K562 (cell line): ENCODE measurements at regions of chr1 and their contacts with region 1.

Region 1: DNA sequence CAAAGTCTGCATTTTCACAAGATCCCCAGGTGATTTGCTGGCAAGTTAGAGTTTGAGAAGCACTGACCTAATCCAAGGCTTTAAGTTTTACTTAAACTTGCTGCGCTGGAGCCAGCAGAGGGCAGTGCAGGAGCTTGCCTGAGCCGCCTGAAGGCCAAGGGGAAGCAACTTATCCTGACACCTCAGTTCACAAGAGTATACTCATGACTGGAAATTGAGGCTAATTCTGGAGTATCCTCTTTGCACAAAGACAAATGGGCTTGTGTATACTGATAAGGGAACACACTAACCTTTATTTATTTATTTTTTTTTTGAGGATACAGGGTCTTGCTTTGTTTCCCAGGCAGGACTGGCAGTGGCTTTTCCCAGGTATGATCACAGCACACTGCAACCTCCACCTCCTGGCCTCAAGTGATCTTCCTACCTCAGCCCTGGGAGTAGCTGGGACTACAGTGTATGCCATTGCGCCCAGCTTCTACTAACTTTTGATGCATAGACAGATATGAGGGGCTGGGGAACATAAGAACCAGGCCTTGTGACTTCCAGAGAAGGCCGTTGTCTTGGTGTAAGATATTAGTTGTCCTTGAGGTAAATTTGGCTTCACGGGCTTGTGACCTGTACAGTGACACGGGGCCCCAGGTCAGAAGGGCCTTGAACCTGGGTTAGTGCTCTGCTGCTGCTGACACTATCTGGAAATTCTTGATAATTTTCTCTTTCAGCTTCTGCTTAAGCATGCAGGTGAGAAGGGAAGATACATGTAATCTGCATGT is 29.0 kb upstream of the SLAMF1 start:
- DNase-seq: peak; percentile 45 to 86 (median 58)
- ATAC-seq: peak; percentile 98
- H3K4me3 ChIP-seq: no peak overlapping the region
- H3K27ac ChIP-seq: no peak overlapping the region
- H3K4me1 ChIP-seq: peaks cover 4 to 13% of the 10 kb centered on the region in 2 experiments
- H3K27me3 ChIP-seq: no peaks in the 10 kb centered on the region; a peak in 1 of 5 replicates
- CTCF ChIP-seq: peak; percentile 87 to 93 (median 90)
- EP300 ChIP-seq: 0 out of 2 replicates have a peak, but pooled peaks have one; percentile 21
- POLR2A ChIP-seq: no peak
- RAD21 ChIP-seq: peak; percentile 79 to 80

Region 2: DNA sequence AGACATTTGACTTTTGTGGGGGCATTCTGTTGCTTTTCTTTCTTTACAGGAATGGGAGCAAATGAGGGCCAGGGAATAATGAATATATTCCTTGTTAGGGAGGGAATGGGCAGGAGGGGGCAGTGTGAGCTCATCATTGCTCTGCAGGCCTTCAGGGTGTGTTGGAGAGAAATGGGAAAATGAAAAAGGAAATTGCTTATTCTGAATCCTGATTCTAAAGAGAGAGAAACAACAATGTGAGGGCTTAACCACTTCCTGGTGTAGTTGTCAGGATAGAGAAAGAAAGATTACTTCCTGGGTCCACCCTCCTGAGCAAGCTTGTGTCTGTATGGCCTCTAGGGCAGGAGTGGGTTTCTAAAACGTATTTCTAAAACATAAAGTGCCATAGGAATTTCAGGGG is 247.2 kb before region 1 on chr1:
- CTCF ChIA-PET with region 1: interaction called, 9 read pairs
- POLR2A ChIA-PET with region 1: no interaction called
- in situ Hi-C with region 1: loop called (anchors 5 kb)
- intact Hi-C with region 1: loop called (anchors 1 kb)
- DNase-seq: peak; percentile 70 to 77 (median 74)
- ATAC-seq: peak; percentile 89
- H3K4me3 ChIP-seq: no peak overlapping the region
- H3K27ac ChIP-seq: no peak overlapping the region; the same call in 2 of the 3 replicates
- H3K4me1 ChIP-seq: peaks cover 4 to 16% of the 10 kb centered on the region in 2 experiments; a peak in 4 of 5 replicates
- H3K27me3 ChIP-seq: no peaks in the 10 kb centered on the region
- CTCF ChIP-seq: peak; percentile 70 to 95 (median 87)
- EP300 ChIP-seq: peak; percentile 38; the same call in 1 of the 2 replicates
- POLR2A ChIP-seq: no peak
- RAD21 ChIP-seq: peak; percentile 99

Region 3: GRCh38 chr1:160618763-160619274 is 57.0 kb before region 1 on chr1:
- CTCF ChIA-PET with region 1: no interaction called
- POLR2A ChIA-PET with region 1: no interaction called
- in situ Hi-C with region 1: no loop called
- intact Hi-C with region 1: loop called (anchors 2 kb)
- DNase-seq: peak; percentile 33 to 51 (median 44)
- ATAC-seq: peak; percentile 70
- H3K4me3 ChIP-seq: no peak overlapping the region
- H3K27ac ChIP-seq: no peak overlapping the region
- H3K4me1 ChIP-seq: peaks cover 0 to 2% of the 10 kb centered on the region in 2 experiments; a peak in 3 of 5 replicates
- H3K27me3 ChIP-seq: no peaks in the 10 kb centered on the region
- CTCF ChIP-seq: peak; percentile 54 to 66 (median 64)
- EP300 ChIP-seq: no peak
- POLR2A ChIP-seq: no peak
- RAD21 ChIP-seq: peak in 1 of 2 experiments; percentile 52; a peak in 2 of 4 replicates

Region 4: DNA sequence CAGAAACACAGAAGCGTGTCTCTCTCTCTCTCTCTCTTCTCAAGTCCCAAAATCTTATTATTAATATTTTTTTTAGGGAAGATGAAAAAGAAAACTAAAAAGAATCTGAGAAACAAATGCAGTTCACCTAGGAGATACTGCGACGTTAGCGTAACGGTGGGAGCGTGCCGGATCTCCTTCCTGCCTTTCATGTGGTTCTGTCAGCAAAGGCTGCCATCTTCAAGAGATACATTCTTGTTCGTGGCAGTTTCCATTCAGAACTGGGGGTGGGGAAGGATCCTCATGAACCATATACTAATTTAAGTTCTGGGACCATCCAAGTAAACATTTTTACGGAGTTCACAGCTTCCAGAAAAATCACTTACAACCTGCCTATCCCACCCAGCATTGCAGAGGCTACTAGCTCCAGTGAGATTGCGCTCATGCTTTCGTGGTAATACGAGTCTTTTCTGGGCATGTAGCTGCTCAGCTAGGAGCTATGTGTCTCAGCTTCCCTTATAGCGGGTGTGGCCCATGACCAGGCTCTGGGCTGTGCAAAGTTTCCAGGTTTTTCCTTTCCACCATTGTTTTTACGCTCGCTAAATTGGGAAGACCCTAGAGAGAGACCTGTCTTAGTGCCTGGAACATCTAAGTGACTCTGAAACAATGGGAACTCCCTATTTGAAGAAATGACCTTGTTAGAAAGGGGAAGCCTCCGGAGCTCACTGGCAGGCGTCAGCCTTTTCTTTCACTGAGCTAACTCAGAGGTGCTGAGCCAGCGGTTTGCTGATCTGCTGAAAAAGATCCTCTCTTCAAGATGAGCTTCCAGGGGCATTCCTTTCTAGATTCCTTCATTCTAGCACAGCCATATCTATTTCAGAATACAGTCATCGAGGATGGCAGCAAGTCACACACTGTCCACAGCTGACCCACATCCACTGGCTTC is 46.3 kb before region 1 on chr1:
- CTCF ChIA-PET with region 1: no interaction called
- POLR2A ChIA-PET with region 1: no interaction called
- in situ Hi-C with region 1: no loop called
- intact Hi-C with region 1: no loop called
- DNase-seq: no peak
- ATAC-seq: peak; percentile 31; the same call in 2 of the 3 replicates
- H3K4me3 ChIP-seq: no peak overlapping the region
- H3K27ac ChIP-seq: no peak overlapping the region
- H3K4me1 ChIP-seq: peaks cover 15 to 48% of the 10 kb centered on the region in 2 experiments; a peak in 4 of 5 replicates
- H3K27me3 ChIP-seq: no peaks in the 10 kb centered on the region
- CTCF ChIP-seq: no peak
- EP300 ChIP-seq: no peak
- POLR2A ChIP-seq: no peak
- RAD21 ChIP-seq: no peak

Region 5: DNA sequence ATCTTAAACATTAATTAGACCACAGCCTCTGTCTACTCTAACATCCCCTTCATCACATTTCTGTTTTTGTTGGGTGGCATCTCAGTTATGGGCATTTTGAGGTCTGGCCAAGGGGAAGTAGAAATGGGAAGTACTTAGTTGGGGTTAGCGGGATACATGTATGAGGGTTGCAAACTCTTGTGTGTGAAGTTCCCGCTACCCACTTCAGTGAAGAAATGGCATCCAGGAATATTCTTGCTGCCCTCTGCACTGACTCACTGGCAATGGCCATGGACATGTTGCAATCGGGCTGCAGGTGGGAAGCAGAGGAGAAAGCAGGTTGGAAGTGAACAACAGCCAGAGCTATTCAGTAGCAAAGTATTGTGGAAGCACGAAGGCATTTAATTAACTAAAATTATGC is 28.4 kb after region 1 on chr1:
- CTCF ChIA-PET with region 1: no interaction called
- POLR2A ChIA-PET with region 1: no interaction called
- in situ Hi-C with region 1: no loop called
- intact Hi-C with region 1: no loop called
- DNase-seq: no peak
- ATAC-seq: no peak
- H3K4me3 ChIP-seq: no peak overlapping the region
- H3K27ac ChIP-seq: no peak overlapping the region
- H3K4me1 ChIP-seq: no peaks in the 10 kb centered on the region; a peak in 1 of 5 replicates
- H3K27me3 ChIP-seq: peaks cover 22% of the 10 kb centered on the region in 2 experiments
- CTCF ChIP-seq: no peak
- EP300 ChIP-seq: no peak
- POLR2A ChIP-seq: no peak
- RAD21 ChIP-seq: no peak

Region 6: GRCh38 chr1:160795951-160796383 is 120.1 kb after region 1 on chr1 and contains the start of gene LY9:
- CTCF ChIA-PET with region 1: no interaction called
- POLR2A ChIA-PET with region 1: no interaction called
- in situ Hi-C with region 1: no loop called
- intact Hi-C with region 1: no loop called
- DNase-seq: no peak
- ATAC-seq: no peak
- H3K4me3 ChIP-seq: no peak within 1 kb of the TSS
- H3K27ac ChIP-seq: no peak within 1 kb of the TSS
- H3K4me1 ChIP-seq: no peaks in the 10 kb centered on the region
- H3K27me3 ChIP-seq: peaks cover 0 to 19% of the 10 kb centered on the region in 2 experiments; a peak in 3 of 5 replicates
- CTCF ChIP-seq: no peak
- EP300 ChIP-seq: no peak
- POLR2A ChIP-seq: no peak
- RAD21 ChIP-seq: no peak
- polyA plus RNA-seq, gene LY9: not detected